CD14-positive monocyte (primary cell): ENCODE measurements at regions of chr21 and their contacts with region 1.

Region 1: DNA sequence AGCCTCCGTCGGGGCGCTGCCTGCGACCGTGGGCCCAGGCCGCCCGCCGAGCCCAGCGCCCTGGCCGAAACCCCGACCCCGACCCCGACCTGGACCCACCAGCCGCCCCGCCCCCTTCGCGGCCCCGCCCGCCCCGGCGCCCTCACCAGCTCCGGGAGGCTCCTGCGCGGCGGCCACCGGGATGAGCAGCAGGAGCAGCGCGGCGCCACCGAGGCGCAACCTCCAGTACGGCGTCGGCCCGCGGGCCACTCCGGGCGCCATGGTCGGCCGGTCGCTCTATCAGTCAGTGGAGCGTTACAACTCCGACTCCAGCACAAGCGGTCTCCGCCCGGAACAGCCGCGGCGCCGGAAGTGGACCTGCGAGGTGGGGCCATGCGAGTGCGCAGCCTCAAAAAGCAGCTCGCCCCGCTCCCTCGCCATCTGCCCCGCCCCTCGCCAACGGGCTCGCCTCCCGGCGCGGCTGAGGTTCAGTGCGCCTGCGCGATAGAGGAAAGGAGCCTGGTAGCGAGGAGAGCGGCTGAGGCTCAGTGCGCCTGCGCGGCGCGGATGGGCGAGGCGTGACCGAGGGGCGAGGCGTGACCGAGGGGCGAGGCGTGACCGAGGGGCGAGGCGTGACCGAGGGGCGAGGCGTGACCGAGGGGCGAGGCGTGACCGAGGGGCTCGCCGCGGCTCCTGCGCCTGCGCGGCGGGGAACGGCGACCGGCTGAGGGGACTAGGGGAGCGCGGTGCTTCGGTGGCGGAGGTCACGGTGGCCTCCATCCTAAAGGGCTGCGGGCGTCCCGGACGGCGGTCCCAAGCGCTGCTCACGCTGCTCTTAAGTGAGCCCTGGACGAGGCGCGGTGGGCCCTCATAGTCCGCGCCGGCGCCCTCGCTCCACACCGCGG is at the start of gene PTTG1IP:
- DNase-seq: peak; percentile 95 to 98 (median 95)
- H3K4me3 ChIP-seq: peak within 1 kb of the TSS; percentile 75 to 92 (median 85)
- H3K4me3 Mint-ChIP-seq: peak within 1 kb of the TSS; percentile 92 to 97
- H3K27ac ChIP-seq: peak within 1 kb of the TSS; percentile 92 to 98
- H3K27ac Mint-ChIP-seq: peak within 1 kb of the TSS; percentile 97 to 99 (median 98)
- H3K4me1 ChIP-seq: peaks cover 82 to 91% of the 10 kb centered on the region in 2 donors
- H3K4me1 Mint-ChIP-seq: peaks cover 74% of the 10 kb centered on the region
- H3K27me3 ChIP-seq: no peaks in the 10 kb centered on the region
- H3K27me3 Mint-ChIP-seq: no peaks in the 10 kb centered on the region
- CTCF ChIP-seq: no peak
- polyA plus RNA-seq, gene PTTG1IP: 118 to 238 (median 206) TPM

Region 2: GRCh38 chr21:44353191-44353970 is 520.2 kb before region 1 on chr21 and contains the start of gene TRPM2:
- intact Hi-C with region 1: no loop called
- DNase-seq: peak; percentile 79 to 88 (median 85)
- H3K4me3 ChIP-seq: peak within 1 kb of the TSS; percentile 23 to 77 (median 45)
- H3K4me3 Mint-ChIP-seq: peak within 1 kb of the TSS; percentile 83 to 91
- H3K27ac ChIP-seq: peak within 1 kb of the TSS; percentile 97 to 99
- H3K27ac Mint-ChIP-seq: peak within 1 kb of the TSS; percentile 91 to 99 (median 98)
- H3K4me1 ChIP-seq: peaks cover 70 to 90% of the 10 kb centered on the region in 2 donors
- H3K4me1 Mint-ChIP-seq: peaks cover 68% of the 10 kb centered on the region
- H3K27me3 ChIP-seq: peaks cover 4 to 15% of the 10 kb centered on the region in 2 donors
- H3K27me3 Mint-ChIP-seq: peaks cover 15 to 29% (median 22%) of the 10 kb centered on the region in 3 donors
- CTCF ChIP-seq: no peak
- polyA plus RNA-seq, gene TRPM2: 7.6 to 21.6 (median 12.2) TPM

Region 3: DNA sequence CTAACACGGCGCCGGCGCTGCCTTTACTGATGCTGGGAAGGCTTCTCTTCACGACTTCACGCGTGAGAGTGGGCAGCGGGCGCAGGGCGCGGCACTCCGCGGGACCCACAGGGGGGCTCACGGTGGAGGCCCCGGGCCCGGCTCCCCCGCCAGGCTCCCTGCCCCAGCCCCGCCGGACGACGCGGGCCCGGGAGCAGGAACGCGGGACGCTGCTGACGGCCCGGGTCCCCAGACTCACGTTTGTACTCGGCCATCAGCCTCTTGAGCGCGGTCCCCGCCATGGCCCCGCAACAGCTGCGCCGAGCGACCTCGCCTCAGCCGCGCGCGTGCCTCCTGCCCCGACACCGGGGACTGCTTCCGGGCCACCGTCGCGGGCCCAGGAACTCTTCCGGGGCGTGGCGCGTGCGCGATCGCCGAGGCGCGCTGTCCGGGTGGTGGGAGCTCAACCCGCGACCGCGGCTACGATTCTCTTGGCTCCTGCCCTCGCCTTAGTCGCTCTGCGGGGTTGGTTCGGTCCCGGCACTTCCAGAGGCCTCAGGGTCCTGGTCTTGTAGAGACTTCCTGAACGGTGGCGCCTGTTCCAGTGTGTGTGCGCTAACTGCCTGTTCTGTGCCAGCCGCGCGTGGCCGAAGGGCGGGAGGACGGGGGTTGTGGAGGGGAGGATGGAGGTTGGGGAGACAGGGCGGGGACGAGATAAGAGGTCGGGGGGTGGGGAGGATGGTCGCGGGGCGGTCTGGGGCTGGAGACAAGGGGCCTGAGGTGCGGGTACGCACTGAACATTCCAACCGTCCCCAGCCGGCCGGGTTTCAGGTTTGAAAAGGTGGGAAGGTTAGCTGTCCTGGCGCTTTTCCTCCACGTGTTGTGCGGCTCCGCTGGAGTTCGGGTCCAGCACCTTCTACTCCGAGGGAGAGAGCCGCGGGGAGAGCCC is 71.9 kb before region 1 on chr21 and contains the start of gene UBE2G2:
- intact Hi-C with region 1: loop called in 1 of 2 experiments (anchors 5 kb)
- DNase-seq: peak; percentile 68 to 76 (median 75)
- H3K4me3 ChIP-seq: peak within 1 kb of the TSS; percentile 65 to 86 (median 73)
- H3K4me3 Mint-ChIP-seq: peak within 1 kb of the TSS; percentile 84 to 97
- H3K27ac ChIP-seq: peak within 1 kb of the TSS in 1 of 2 donors; percentile 74
- H3K27ac Mint-ChIP-seq: peak within 1 kb of the TSS; percentile 42 to 92 (median 84)
- H3K4me1 ChIP-seq: peaks cover 22 to 32% of the 10 kb centered on the region in 2 donors
- H3K4me1 Mint-ChIP-seq: peaks cover 33% of the 10 kb centered on the region
- H3K27me3 ChIP-seq: no peaks in the 10 kb centered on the region
- H3K27me3 Mint-ChIP-seq: peaks cover 0 to 2% (median 0%) of the 10 kb centered on the region in 3 donors
- CTCF ChIP-seq: peak; percentile 15
- polyA plus RNA-seq, gene UBE2G2: 22.5 to 123 (median 31.0) TPM

Region 4: GRCh38 chr21:44884097-44884496 is 10.5 kb after region 1 on chr21:
- intact Hi-C with region 1: no loop called
- DNase-seq: peak in 1 of 3 donors; percentile 55
- H3K4me3 ChIP-seq: no peak overlapping the region
- H3K4me3 Mint-ChIP-seq: peak overlapping the region in 1 of 2 donors; percentile 2
- H3K27ac ChIP-seq: peak overlapping the region; percentile 64 to 78
- H3K27ac Mint-ChIP-seq: peak overlapping the region; percentile 90 to 96 (median 95)
- H3K4me1 ChIP-seq: peaks cover 52% of the 10 kb centered on the region in 2 donors
- H3K4me1 Mint-ChIP-seq: peaks cover 53% of the 10 kb centered on the region
- H3K27me3 ChIP-seq: no peaks in the 10 kb centered on the region
- H3K27me3 Mint-ChIP-seq: peaks cover 0 to 3% (median 0%) of the 10 kb centered on the region in 3 donors
- CTCF ChIP-seq: no peak

Region 5: DNA sequence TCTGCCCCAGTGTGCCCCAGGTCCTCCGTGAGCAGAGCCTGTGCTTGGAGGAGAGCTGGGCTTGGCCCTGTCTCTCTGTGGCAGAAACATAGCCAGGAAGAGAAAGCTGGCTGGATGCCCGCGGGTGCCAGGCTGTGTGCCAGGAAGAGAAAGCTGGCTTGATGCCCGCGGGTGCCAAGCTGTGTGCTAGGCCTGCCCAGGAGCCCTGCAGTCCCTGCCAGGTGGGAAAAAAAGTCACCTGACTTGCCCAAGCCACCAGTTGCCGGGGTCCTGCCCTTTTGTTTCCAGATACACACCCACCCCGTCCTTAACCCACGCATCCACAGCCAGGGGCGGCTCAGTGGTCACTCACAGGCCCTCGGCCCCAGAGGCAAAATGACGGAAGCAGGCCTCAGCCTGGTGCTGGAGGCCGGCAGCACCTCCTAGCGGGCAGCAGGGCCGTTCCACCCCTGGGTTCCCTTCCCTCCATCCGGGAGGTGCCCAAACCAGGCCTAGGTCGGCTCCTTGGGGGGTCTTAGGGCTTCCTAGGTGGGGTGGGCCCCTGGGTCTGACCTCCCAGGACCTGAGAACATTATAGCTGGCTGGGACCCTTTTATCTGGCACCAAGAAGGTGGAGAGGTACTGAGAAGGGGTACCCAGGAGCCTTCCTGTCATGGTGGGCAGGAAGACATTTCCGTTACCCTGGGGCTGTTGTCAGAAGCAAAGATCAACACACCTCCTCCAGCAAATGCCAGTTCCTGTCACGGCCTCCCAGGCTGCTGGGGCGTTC is 38.0 kb after region 1 on chr21:
- intact Hi-C with region 1: loop called in 1 of 2 experiments (anchors 5 kb)
- DNase-seq: peak; percentile 67 to 78 (median 74)
- H3K4me3 ChIP-seq: peak overlapping the region; percentile 1 to 98 (median 11)
- H3K4me3 Mint-ChIP-seq: peak overlapping the region; percentile 70 to 88
- H3K27ac ChIP-seq: peak overlapping the region; percentile 69 to 81
- H3K27ac Mint-ChIP-seq: peak overlapping the region; percentile 74 to 92 (median 87)
- H3K4me1 ChIP-seq: peaks cover 99 to 100% of the 10 kb centered on the region in 2 donors
- H3K4me1 Mint-ChIP-seq: peaks cover 89% of the 10 kb centered on the region
- H3K27me3 ChIP-seq: no peaks in the 10 kb centered on the region
- H3K27me3 Mint-ChIP-seq: peaks cover 0 to 2% (median 2%) of the 10 kb centered on the region in 3 donors
- CTCF ChIP-seq: peak; percentile 93